ENCODE measurements at regions of chr10 and their contacts with region 1.

Region 1: DNA sequence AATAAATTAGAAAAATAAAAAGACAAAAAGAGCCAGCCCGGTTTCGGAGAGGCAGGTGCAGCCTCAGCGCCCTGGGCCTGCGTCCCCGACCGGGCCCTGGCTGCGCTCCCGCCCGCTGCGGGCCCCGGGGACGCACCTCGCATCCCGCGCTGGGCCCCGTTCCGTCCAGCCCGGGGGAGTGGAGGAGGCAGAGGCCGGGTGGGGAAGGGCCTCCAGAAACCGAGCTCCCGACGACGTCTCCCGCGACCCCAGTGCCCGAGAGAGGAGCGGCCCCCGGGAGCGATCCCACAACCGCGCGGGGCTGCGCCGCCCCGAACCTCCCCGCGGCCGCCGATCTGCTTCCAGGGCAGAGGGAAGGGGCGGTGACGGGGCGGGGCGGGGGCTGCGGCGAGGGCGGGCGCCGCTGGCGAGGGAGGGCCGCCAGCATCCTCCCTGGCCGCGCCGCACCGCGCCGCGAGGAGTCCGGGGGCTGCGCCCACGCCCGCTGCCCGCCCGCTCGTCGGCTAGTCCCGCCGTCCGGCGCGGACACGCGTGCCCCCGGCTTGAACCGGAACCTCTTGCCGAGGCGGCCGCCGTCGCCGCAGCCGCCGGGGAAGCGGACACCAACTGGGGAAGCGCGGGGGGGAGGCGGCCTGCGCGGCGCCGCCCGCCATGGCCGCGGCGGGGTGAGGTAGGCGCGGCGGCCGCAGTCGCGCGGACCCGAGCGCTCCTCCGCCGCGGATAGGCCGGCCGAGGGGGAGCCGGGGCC is at the start of gene CCNY:
- DNase-seq: peak; percentile 75
- H3K4me3 ChIP-seq: peak within 1 kb of the TSS; percentile 91
- H3K27ac ChIP-seq: peak within 1 kb of the TSS; percentile 32
- H3K4me1 ChIP-seq: peaks cover 39% of the 10 kb centered on the region
- CTCF ChIP-seq: no peak
- total RNA-seq, gene CCNY: 37.0 and 40.6 TPM in 2 replicates

Region 2: GRCh38 chr10:35090162-35090954 is 245.9 kb before region 1 on chr10 and contains the start of gene CUL2:
- CTCF ChIA-PET with region 1: no interaction called
- POLR2A ChIA-PET with region 1: no interaction called
- intact Hi-C with region 1: loop called (anchors 10 kb)
- DNase-seq: peak; percentile 94
- H3K4me3 ChIP-seq: peak within 1 kb of the TSS; percentile 86
- H3K27ac ChIP-seq: peak within 1 kb of the TSS; percentile 67
- H3K4me1 ChIP-seq: peaks cover 15% of the 10 kb centered on the region
- CTCF ChIP-seq: no peak
- total RNA-seq, gene CUL2: 20.7 and 25.5 TPM in 2 replicates

Region 3: DNA sequence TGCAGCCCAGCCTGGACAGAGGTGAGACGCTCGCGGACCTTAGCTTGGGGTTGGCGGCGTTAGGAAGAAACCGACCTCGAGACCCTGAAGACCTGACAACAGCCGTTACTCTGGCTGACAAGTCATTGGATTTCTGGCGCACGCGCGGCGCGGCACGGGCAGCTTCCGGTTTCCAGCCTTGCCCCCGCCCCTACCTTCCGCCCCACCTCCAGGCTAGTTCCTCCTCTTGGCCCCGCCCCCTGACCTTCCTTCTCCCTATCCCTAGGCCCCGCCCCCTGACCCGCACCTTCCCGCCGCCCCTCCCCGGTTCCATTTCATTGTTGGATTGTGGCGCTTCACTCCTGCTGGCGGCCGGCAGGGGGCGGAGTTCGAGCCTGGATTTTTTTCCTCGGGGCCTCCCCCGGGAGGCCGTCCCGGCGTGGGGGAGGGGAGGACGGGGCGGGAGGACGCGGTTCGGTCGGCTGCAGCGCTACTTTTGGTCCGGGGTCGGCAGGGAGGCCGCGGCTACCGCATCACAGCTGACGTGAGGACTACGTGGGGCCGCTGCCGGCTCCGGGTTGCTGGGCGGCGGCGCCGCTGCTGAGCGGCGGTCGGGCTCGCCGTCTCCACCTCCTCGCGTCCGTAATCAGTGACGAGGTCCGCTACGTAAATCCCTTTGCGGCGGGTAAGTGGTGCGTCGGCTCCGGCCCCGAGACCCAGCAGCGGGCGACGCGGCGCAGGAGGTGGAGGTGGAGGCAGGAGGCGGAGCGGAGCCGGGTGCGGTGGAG is 209.5 kb before region 1 on chr10 and contains the start of gene CREM:
- CTCF ChIA-PET with region 1: no interaction called
- POLR2A ChIA-PET with region 1: no interaction called
- intact Hi-C with region 1: loop called (anchors 5 kb)
- DNase-seq: peak; percentile 98
- H3K4me3 ChIP-seq: peak within 1 kb of the TSS; percentile 93
- H3K27ac ChIP-seq: peak within 1 kb of the TSS; percentile 85
- H3K4me1 ChIP-seq: peaks cover 43% of the 10 kb centered on the region
- CTCF ChIP-seq: peak; percentile 82
- total RNA-seq, gene CREM: 31.9 and 38.1 TPM in 2 replicates

Region 4: DNA sequence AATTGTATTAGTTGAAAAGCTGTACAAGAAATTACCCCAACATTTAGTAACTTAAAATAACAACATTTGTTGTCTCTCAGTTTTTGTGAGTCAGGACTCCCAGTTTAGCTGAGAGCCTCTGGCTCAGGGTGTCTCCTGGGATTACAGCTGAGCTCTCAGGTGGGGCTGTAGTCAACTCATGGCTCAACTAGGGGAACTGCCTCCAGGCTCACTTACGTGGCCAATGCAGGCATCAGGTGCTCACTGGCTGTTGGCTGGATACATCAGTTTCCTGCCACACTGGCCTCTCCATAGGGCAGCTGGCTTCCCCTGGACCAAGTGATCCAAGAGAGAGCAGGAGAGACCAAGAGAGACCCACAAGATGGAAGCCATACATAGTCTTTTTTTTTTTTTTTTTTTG is 17.5 kb after region 1 on chr10:
- CTCF ChIA-PET with region 1: no interaction called
- POLR2A ChIA-PET with region 1: interaction called, 11 read pairs
- intact Hi-C with region 1: no loop called
- DNase-seq: peak; percentile 61
- H3K4me3 ChIP-seq: no peak overlapping the region
- H3K27ac ChIP-seq: no peak overlapping the region
- H3K4me1 ChIP-seq: peaks cover 38% of the 10 kb centered on the region
- CTCF ChIP-seq: no peak

Region 5: DNA sequence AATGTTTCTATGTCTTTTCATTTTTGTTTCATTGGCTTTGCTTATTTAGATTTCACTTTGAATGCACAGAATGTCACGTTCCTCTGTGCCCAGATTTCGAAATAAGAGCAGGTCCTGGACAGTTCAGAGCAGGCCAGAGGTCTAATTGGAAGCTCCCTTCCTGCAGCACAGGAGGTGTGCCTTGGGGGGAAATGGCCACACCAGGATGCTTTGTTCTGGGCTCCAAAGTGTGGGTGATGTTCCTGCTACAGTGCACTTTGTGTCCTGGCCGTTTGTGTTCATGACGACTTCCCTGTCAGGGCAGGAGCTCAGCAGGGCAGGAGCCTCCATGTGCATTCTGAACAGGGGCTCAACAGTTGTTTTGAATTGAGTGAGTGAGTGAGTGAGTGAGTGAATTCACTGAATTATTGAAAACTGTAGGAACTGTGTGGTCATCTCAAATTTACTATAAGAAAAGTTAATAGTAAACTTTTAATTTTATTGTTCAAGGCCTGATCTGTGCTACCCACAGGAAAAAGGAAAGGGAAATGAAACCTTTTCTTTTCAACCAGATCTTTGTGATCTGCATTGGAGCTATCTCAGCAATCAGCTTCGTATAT is 159.4 kb after region 1 on chr10:
- CTCF ChIA-PET with region 1: no interaction called
- POLR2A ChIA-PET with region 1: no interaction called
- intact Hi-C with region 1: loop called (anchors 5 kb)
- DNase-seq: peak; percentile 56
- H3K4me3 ChIP-seq: peak overlapping the region; percentile 30
- H3K27ac ChIP-seq: peak overlapping the region; percentile 79
- H3K4me1 ChIP-seq: peaks cover 90% of the 10 kb centered on the region
- CTCF ChIP-seq: no peak

Region 6: GRCh38 chr10:35563261-35563891 is 227.1 kb after region 1 on chr10:
- CTCF ChIA-PET with region 1: no interaction called
- POLR2A ChIA-PET with region 1: no interaction called
- intact Hi-C with region 1: loop called (anchors 10 kb)
- DNase-seq: peak; percentile 77
- H3K4me3 ChIP-seq: no peak overlapping the region
- H3K27ac ChIP-seq: no peak overlapping the region
- H3K4me1 ChIP-seq: peaks cover 18% of the 10 kb centered on the region
- CTCF ChIP-seq: peak; percentile 100

Region 7: GRCh38 chr10:35642027-35642792 is 306.0 kb after region 1 on chr10 and contains the start of gene FZD8:
- CTCF ChIA-PET with region 1: no interaction called
- POLR2A ChIA-PET with region 1: no interaction called
- intact Hi-C with region 1: loop called (anchors 2 kb)
- DNase-seq: peak; percentile 90
- H3K4me3 ChIP-seq: peak within 1 kb of the TSS; percentile 81
- H3K27ac ChIP-seq: no peak within 1 kb of the TSS
- H3K4me1 ChIP-seq: peaks cover 17% of the 10 kb centered on the region
- CTCF ChIP-seq: peak; percentile 67
- total RNA-seq, gene FZD8: 4.7 and 4.9 TPM in 2 replicates

Measured in OCI-LY7 (cell line).